ENCODE measurements at regions of chr20 and their contacts with region 1.

Region 1: GRCh38 chr20:51014797-51015722 is 7.8 kb downstream of the KCNG1 start:
- DNase-seq: no peak
- H3K4me3 ChIP-seq: no peak overlapping the region
- H3K27ac ChIP-seq: no peak overlapping the region
- H3K27me3 ChIP-seq: no peaks in the 10 kb centered on the region
- CTCF ChIP-seq: peak; percentile 88

Region 2: GRCh38 chr20:50980851-50981713 is 34.0 kb before region 1 on chr20:
- CTCF ChIA-PET with region 1: interaction called, 20 read pairs
- POLR2A ChIA-PET with region 1: no interaction called
- DNase-seq: no peak
- H3K4me3 ChIP-seq: no peak overlapping the region
- H3K27ac ChIP-seq: peak overlapping the region; percentile 99
- H3K27me3 ChIP-seq: no peaks in the 10 kb centered on the region
- CTCF ChIP-seq: peak; percentile 83

Region 3: DNA sequence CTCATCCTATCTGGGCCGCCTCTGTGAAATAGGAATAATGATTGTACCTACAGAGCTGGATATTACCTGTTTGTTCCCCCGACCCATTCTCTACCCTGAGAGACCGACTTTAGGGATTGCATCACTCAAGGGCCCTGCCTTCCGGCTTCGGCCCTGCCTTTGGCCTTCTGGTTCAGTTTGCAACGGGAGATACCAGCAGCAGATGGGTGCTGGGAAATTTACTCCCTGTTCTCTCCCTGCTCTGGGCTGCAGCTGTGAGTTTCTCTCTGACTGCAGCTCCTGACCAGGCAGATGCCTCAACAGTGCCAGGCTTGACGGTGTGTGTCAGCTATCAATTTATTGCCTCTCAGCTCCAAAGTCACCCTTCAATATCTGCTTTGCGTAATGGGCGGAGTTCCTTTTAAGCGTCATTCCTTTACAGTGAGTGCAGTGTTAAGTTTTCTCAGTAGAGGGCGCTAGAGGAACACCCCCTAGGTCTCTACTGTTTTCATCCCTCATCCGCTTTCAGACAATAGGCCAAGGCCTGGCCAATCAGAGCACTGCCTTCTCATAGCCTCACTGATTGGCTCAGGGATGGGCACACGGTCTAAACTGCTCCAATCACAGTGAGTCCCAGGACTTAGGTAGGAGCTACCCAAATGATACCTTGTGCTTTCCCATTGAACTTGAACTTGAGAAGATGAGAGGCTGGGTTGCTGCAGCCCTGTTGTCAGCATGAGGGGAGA is 22.2 kb before region 1 on chr20:
- CTCF ChIA-PET with region 1: interaction called, 22 read pairs
- POLR2A ChIA-PET with region 1: no interaction called
- DNase-seq: no peak
- H3K4me3 ChIP-seq: no peak overlapping the region
- H3K27ac ChIP-seq: no peak overlapping the region
- H3K27me3 ChIP-seq: no peaks in the 10 kb centered on the region
- CTCF ChIP-seq: peak; percentile 75

Region 4: GRCh38 chr20:51004781-51005180 is 10.3 kb before region 1 on chr20:
- CTCF ChIA-PET with region 1: interaction called, 11 read pairs
- POLR2A ChIA-PET with region 1: no interaction called
- DNase-seq: no peak
- H3K4me3 ChIP-seq: no peak overlapping the region
- H3K27ac ChIP-seq: no peak overlapping the region
- H3K27me3 ChIP-seq: no peaks in the 10 kb centered on the region
- CTCF ChIP-seq: no peak

Region 5: GRCh38 chr20:51029963-51030920 is 15.2 kb after region 1 on chr20:
- CTCF ChIA-PET with region 1: interaction called, 31 read pairs
- POLR2A ChIA-PET with region 1: no interaction called
- DNase-seq: no peak
- H3K4me3 ChIP-seq: no peak overlapping the region
- H3K27ac ChIP-seq: no peak overlapping the region
- H3K27me3 ChIP-seq: peaks cover 10% of the 10 kb centered on the region
- CTCF ChIP-seq: no peak

Region 6: GRCh38 chr20:51111290-51111689 is 96.2 kb after region 1 on chr20:
- CTCF ChIA-PET with region 1: no interaction called
- POLR2A ChIA-PET with region 1: no interaction called
- DNase-seq: no peak
- H3K4me3 ChIP-seq: no peak overlapping the region
- H3K27ac ChIP-seq: no peak overlapping the region
- H3K27me3 ChIP-seq: peaks cover 33% of the 10 kb centered on the region
- CTCF ChIP-seq: no peak

Region 7: GRCh38 chr20:51287592-51288378 is 272.7 kb after region 1 on chr20:
- CTCF ChIA-PET with region 1: interaction called, 10 read pairs
- POLR2A ChIA-PET with region 1: no interaction called
- DNase-seq: no peak
- H3K4me3 ChIP-seq: no peak overlapping the region
- H3K27ac ChIP-seq: no peak overlapping the region
- H3K27me3 ChIP-seq: peaks cover 25% of the 10 kb centered on the region
- CTCF ChIP-seq: no peak

Region 8: GRCh38 chr20:51306503-51307358 is 291.7 kb after region 1 on chr20:
- CTCF ChIA-PET with region 1: interaction called, 69 read pairs
- POLR2A ChIA-PET with region 1: no interaction called
- DNase-seq: peak; percentile 34
- H3K4me3 ChIP-seq: no peak overlapping the region
- H3K27ac ChIP-seq: no peak overlapping the region
- H3K27me3 ChIP-seq: no peaks in the 10 kb centered on the region
- CTCF ChIP-seq: peak; percentile 87

Measured in AG04450 (cell line).